Endothelial cell of umbilical vein (primary cell): ENCODE measurements at regions of chr4 and their contacts with region 1.

Region 1: DNA sequence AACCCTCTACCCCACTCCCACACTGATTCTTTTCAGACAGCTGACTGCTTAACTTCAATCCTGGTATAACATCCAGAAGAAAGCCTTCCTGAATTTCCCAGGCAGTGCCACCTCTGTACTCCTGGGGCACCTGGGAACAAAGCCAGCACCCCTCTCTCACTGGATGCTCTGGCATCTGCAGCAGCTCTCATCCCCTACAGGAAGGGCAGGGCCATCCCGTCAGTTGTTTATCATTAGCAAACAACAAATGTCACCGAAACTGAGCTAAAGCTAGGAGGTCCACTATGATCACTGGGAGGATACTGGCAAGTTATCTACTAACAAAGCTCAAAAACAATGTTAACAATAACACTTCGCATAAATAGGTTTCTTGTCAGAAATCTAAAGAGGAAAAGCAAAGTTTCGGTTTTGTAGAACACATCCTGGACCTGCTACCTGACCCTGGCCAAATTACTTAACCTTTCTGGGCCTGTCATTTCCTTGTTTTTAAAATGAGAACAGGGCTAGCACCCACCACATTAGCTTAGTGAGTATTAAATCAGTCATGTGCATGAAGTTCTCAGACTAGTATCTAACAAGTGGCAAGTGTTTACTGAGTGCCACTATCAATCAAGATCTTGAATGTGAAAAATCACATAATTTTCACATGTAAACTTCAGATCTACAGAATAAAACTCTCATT is 86.6 kb downstream of the NR3C2 start:
- DNase-seq: peak; percentile 93
- H3K4me3 ChIP-seq: peak overlapping the region in 2 of 3 experiments; percentile 19 to 23
- H3K27ac ChIP-seq: peak overlapping the region; percentile 81
- H3K4me1 ChIP-seq: peaks cover 42% of the 10 kb centered on the region
- H3K27me3 ChIP-seq: no peaks in the 10 kb centered on the region
- CTCF ChIP-seq: no peak
- POLR2A ChIP-seq: no peak

Region 2: DNA sequence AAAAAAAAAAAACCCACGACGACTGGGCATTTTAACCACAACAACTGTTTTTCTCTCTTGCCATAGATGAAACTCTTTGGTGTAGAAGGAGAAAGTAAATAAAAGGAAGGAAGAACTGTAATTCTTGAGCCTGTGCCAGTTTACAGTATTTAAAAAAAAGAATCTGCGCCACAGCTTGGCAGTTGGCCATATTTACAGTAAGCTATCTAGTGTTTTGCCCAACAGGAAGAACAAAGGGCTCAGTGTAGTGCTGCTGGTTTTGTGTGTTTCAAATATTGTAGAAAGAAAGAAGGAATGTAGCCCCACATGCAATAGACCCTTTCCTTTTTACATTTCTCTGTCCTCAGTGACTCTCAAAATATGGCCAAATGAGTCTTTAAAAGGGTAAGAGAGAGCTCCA is 20.6 kb after region 1 on chr4:
- CTCF ChIA-PET with region 1: interaction called, 5 read pairs
- POLR2A ChIA-PET with region 1: interaction called, 15 read pairs
- dilution Hi-C with region 1: no loop called
- intact Hi-C with region 1: loop called (anchors 1 kb)
- DNase-seq: peak; percentile 91
- H3K4me3 ChIP-seq: peak overlapping the region in 1 of 3 experiments; percentile 33
- H3K27ac ChIP-seq: peak overlapping the region; percentile 46
- H3K4me1 ChIP-seq: peaks cover 11% of the 10 kb centered on the region
- H3K27me3 ChIP-seq: no peaks in the 10 kb centered on the region
- CTCF ChIP-seq: no peak
- POLR2A ChIP-seq: no peak

Region 3: GRCh38 chr4:148834804-148835631 is 479.4 kb after region 1 on chr4:
- CTCF ChIA-PET with region 1: no interaction called
- POLR2A ChIA-PET with region 1: no interaction called
- dilution Hi-C with region 1: no loop called
- intact Hi-C with region 1: loop called (anchors 10 kb)
- DNase-seq: peak; percentile 89
- H3K4me3 ChIP-seq: no peak overlapping the region
- H3K27ac ChIP-seq: peak overlapping the region; percentile 94
- H3K4me1 ChIP-seq: peaks cover 43% of the 10 kb centered on the region
- H3K27me3 ChIP-seq: no peaks in the 10 kb centered on the region
- CTCF ChIP-seq: no peak
- POLR2A ChIP-seq: no peak

Region 4: DNA sequence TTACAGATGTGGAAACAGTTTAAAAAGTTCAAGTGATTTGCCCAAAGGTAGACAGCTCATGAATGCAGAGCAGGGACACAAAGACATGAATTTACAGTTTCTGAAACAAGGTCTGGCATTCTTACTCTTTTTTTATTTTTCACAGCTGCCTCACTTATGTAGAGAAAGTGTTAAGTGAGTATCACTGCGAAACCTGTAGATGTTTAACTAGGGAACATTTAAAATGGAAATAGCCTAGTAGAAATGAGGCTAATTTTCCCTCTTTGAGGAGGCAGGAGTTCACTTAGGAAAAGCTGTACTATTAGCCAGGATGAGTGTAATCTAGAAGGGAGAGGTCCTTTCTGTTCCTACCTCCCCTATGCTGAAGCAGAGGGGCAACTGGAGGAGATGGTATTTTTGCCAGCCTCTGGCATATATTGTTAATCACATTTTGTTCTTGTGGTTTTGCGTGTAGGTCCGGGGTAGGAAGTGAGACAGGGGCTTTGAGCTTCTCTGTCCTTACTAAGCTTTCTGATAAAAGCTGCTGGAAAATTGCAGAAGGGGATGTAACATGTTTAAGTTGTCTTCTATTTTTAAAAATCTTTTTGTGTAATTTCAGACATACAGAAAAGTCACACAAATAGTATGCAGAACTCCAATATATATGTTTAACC is 579.5 kb after region 1 on chr4:
- CTCF ChIA-PET with region 1: no interaction called
- POLR2A ChIA-PET with region 1: no interaction called
- dilution Hi-C with region 1: no loop called
- intact Hi-C with region 1: no loop called
- DNase-seq: no peak
- H3K4me3 ChIP-seq: no peak overlapping the region
- H3K27ac ChIP-seq: no peak overlapping the region
- H3K4me1 ChIP-seq: no peaks in the 10 kb centered on the region
- H3K27me3 ChIP-seq: no peaks in the 10 kb centered on the region
- CTCF ChIP-seq: no peak
- POLR2A ChIP-seq: no peak